ENCODE measurements at regions of chr7 and their contacts with region 1.

Region 1: DNA sequence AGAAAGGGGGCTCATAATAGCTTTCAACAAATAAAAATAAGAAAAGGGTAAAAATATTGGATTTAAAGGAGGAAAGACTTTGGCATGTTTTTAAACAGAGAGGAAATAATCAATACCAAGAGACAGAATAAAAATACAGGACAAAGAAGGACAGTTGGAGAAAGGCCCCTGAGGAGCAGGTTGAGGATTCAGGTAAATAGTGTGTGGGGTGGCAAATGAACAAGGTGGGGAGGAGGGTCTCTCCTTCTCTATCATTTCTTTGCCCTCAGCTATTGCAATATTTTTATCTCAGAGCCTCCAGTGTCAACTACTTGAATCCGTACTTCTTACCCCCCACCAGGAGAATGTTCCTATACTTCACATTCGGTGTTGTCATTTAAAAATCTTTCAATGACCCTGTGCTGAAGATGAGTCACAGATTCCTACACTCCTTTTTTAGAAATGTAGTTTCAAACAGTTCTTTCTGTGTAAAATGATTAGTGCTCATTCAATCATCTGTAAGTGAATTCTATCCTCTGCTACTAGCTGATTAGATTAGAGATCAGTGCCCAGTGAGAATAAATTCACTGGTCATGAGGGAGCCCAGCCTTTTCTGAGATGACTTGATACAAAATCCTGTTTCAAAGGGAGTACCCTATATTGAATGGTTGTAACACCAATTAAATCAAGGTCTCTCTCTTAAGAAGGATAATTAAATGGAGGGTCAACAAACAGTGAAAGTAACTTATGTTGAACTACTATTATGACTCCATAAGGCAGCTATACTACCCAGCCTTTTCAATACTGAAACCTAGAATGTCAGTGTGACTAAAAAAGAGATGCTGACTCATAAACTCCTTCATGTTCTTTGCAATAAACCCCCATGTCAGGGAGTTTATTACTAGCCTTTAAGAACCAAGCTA is 50.4 kb upstream of the WNT16 start:
- DNase-seq: no peak
- H3K4me3 Mint-ChIP-seq: no peak overlapping the region
- H3K27ac Mint-ChIP-seq: peak overlapping the region; percentile 79
- H3K4me1 Mint-ChIP-seq: peaks cover 37% of the 10 kb centered on the region
- H3K27me3 Mint-ChIP-seq: peaks cover 7% of the 10 kb centered on the region

Region 2: GRCh38 chr7:120981888-120982615 is 296.3 kb before region 1 on chr7:
- intact Hi-C with region 1: loop called (anchors 2 kb)
- DNase-seq: no peak
- H3K4me3 Mint-ChIP-seq: no peak overlapping the region
- H3K27ac Mint-ChIP-seq: peak overlapping the region; percentile 86
- H3K4me1 Mint-ChIP-seq: peaks cover 26% of the 10 kb centered on the region
- H3K27me3 Mint-ChIP-seq: no peaks in the 10 kb centered on the region

Region 3: DNA sequence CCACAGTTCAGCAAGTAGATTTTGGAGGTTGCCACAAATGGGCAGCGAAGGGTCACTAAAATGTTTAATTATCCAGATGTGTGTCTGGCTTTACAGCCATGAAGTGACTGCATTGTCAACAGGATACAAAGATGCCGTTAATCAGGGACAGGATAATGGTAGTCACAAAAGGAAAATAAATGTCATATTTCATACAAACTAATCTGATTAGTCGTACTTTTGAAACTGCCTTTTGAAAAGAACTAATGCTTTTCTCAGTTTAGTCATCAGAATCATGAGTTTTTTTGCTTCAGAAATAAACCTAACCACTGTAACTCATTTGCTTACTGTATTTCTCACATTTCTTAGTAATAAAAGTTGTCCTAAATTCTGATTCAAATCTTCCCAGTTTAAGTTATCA is 28.2 kb after region 1 on chr7:
- intact Hi-C with region 1: loop called (anchors 1 kb)
- DNase-seq: no peak
- H3K4me3 Mint-ChIP-seq: no peak overlapping the region
- H3K27ac Mint-ChIP-seq: peak overlapping the region; percentile 44
- H3K4me1 Mint-ChIP-seq: peaks cover 12% of the 10 kb centered on the region
- H3K27me3 Mint-ChIP-seq: peaks cover 12% of the 10 kb centered on the region

Region 4: GRCh38 chr7:121500360-121501058 is 222.1 kb after region 1 on chr7:
- intact Hi-C with region 1: loop called (anchors 1 kb)
- DNase-seq: no peak
- H3K4me3 Mint-ChIP-seq: no peak overlapping the region
- H3K27ac Mint-ChIP-seq: peak overlapping the region; percentile 86
- H3K4me1 Mint-ChIP-seq: peaks cover 25% of the 10 kb centered on the region
- H3K27me3 Mint-ChIP-seq: no peaks in the 10 kb centered on the region

Region 5: DNA sequence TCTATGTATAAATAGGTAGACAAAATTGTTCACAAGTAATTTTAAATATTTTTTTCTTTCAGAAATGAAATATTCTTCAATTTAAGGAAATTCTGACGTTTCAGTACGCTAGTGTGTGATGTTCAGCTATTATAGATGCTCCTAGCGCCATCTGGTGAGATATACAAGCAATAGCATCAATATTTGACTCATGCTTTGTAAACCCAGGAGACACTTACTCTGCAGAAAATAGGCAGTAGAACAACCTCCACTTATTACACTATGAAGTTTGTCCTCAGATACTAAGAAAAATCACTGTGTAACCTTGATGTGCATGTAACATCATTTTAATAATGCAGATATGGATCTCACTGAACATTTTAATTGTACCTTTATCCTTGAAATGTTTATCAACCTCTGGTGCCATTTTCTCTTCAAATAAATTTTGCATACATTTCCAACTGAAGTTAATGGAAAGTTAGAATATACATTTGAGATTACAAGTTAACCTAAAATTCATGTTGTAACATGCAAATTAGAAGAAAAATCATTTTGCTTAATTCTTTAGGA is 269.2 kb after region 1 on chr7:
- intact Hi-C with region 1: loop called (anchors 2 kb)
- DNase-seq: no peak
- H3K4me3 Mint-ChIP-seq: no peak overlapping the region
- H3K27ac Mint-ChIP-seq: no peak overlapping the region
- H3K4me1 Mint-ChIP-seq: peaks cover 38% of the 10 kb centered on the region
- H3K27me3 Mint-ChIP-seq: peaks cover 4% of the 10 kb centered on the region

Measured in activated T-helper 2 cell treated with anti-CD3 and anti-CD28 coated beads, Interferon-gamma antibody, Interleukin-2, Interleukin-4, amounts not matched to agents 10 μg/mL and 5 μg/mL and 100 μg/mL, durations not matched to agents 14 hours and 24 hours and 36 hours (primary cell).